ENCODE measurements at regions of chr15 and their contacts with region 1.

Region 1: DNA sequence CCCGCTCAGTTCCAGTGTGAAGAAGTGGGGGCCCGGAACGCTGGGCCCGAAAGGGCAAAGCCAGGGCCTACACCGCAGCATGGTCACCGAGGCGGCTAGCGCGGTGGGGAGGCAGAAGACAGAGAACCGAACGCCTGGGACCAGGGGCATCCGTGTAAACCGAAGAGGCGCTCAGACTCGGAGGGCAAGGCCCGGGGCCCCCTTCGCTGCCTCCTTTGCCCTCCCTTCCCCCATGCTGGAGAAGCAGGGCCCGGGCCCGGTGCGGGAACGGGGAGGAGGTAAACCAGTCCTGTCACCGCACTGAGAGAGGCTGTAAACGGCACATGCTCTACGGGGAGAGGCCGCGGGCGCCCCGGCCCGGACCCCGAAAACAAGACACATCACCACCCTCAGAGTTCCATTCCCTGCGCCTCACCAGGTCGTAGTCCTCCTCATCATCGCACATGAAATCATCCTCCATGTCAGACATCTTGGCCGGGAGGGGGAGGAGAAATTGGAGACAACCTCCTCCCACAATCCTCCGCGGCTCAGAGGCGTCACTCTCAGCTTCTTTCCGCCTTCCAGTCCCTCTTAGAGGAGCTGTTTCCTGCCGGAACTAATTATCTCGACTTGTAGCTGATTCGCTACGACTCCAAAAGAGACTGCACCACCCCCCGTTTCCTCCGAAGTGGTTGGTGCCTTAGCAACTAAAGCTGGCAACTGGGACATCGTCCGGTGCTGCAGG is at the start of gene COPS2:
- DNase-seq: peak; percentile 92
- ATAC-seq: peak; percentile 99
- total RNA-seq, gene COPS2: 82.4 TPM

Region 2: GRCh38 chr15:48877630-48878595 is 277.4 kb before region 1 on chr15 and contains the start of gene EID1:
- intact Hi-C with region 1: loop called (anchors 5 kb)
- DNase-seq: peak; percentile 96
- ATAC-seq: peak; percentile 100
- total RNA-seq, gene EID1: 201 TPM

Region 3: DNA sequence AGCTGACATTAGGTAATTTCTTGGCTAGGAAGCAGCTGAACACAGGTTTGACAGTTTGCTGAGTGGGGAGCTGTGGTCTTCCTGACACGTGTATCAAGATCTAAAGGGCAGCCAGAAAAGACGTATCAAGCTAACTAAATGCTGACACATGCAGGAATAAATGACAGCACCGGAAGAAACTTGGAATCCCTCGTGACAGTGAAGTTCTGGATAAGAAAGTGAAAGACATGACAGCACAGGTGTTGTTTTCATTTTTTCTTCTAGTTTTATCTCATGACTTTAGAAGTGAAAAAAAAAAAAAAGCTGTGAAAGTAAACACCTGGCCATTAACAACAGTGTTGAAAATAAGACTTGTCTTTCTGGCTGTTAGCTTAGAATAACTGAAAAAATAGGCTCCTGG is 316.5 kb after region 1 on chr15:
- intact Hi-C with region 1: no loop called
- DNase-seq: no peak
- ATAC-seq: no peak

Region 4: DNA sequence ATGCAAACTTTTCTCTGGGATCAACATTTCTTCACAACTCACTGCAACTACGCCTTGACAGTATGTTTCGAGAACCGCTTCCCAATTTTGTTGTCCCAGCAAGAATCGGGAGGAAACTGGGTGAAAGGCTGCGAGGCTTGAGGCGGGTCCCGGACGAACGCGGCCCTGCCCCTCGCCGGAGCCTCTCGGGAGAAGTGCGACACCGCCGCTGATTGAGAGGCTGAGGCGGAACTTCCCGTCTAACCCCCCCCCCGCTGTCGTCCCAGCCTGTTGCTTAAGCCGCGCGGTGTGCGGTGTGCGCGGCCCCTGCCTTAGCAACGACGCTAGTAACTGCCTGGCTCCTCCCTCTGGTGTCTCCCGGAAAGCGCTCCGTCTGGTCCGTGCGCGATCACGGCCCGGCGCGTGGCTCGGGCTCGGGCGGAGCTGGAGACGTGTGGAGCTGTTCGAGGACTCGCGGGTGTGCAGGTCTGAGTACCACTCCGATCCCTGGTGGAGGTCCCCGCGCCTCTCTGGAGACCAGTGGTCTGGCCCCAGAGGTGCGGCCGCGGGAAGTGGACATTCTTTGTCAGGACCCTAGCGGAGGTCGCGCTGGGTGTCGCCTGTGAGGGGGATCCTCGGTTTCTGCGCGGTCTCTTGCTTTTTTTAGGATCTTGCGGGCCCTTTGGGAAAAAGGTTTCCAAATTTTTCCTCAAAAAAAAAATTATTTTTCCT is 465.5 kb after region 1 on chr15 and contains the starts of genes DTWD1 and FAM227B:
- intact Hi-C with region 1: loop called (anchors 10 kb)
- DNase-seq: peak; percentile 98
- ATAC-seq: peak; percentile 99
- total RNA-seq, gene DTWD1: 22.8 TPM
- total RNA-seq, gene FAM227B: 19.4 TPM